ENCODE measurements at regions of chr21 and their contacts with region 1.

Region 1: GRCh38 chr21:45136927-45137611 is 62.7 kb downstream of the ADARB1 start:
- DNase-seq: no peak
- H3K4me3 ChIP-seq: no peak overlapping the region
- H3K27ac ChIP-seq: no peak overlapping the region
- H3K4me1 ChIP-seq: peaks cover 17% of the 10 kb centered on the region
- H3K27me3 ChIP-seq: no peaks in the 10 kb centered on the region
- CTCF ChIP-seq: peak; percentile 53 to 84 (median 77)
- POLR2A ChIP-seq: no peak

Region 2: GRCh38 chr21:44911389-44912157 is 225.5 kb before region 1 on chr21:
- intact Hi-C with region 1: no loop called
- DNase-seq: no peak
- H3K4me3 ChIP-seq: peak overlapping the region in 1 of 2 donors; percentile 1
- H3K27ac ChIP-seq: no peak overlapping the region
- H3K4me1 ChIP-seq: peaks cover 23% of the 10 kb centered on the region
- H3K27me3 ChIP-seq: no peaks in the 10 kb centered on the region
- CTCF ChIP-seq: peak in 2 of 3 experiments; percentile 3 to 43
- POLR2A ChIP-seq: no peak

Region 3: DNA sequence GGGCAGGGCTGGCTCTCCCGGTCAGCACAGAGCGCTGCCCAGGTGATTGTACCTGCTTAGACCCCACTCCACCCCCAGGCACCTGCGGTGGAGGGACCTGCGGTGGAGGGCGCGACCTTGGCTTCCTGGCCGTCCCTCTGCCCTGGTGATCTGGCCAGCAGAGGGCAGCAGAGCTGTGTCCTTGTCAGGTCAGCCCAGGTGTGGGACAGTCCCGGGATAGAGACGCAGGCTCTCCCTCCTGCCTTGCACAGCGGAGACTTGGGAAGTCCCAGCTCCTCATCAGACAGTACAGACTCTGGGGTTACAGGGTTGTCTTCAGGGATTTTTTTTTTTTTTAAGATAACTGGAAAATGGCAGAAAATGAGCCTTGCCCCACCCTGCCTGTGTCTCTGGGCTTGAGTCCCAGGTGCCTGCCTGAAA is 187.3 kb before region 1 on chr21:
- intact Hi-C with region 1: loop called (anchors 2 kb)
- DNase-seq: no peak
- H3K4me3 ChIP-seq: no peak overlapping the region
- H3K27ac ChIP-seq: no peak overlapping the region
- H3K4me1 ChIP-seq: peaks cover 17% of the 10 kb centered on the region
- H3K27me3 ChIP-seq: no peaks in the 10 kb centered on the region
- CTCF ChIP-seq: peak; percentile 89 to 95 (median 95)
- POLR2A ChIP-seq: no peak

Region 4: GRCh38 chr21:45074048-45074817 is 62.8 kb before region 1 on chr21 and contains the start of gene ADARB1:
- intact Hi-C with region 1: loop called (anchors 5 kb)
- DNase-seq: no peak
- H3K4me3 ChIP-seq: peak within 1 kb of the TSS; percentile 89 to 97
- H3K27ac ChIP-seq: peak within 1 kb of the TSS; percentile 94
- H3K4me1 ChIP-seq: peaks cover 29% of the 10 kb centered on the region
- H3K27me3 ChIP-seq: no peaks in the 10 kb centered on the region
- CTCF ChIP-seq: no peak
- POLR2A ChIP-seq: peak in 1 of 2 donors; percentile 79
- total RNA-seq, gene ADARB1: 19.6 TPM

Region 5: DNA sequence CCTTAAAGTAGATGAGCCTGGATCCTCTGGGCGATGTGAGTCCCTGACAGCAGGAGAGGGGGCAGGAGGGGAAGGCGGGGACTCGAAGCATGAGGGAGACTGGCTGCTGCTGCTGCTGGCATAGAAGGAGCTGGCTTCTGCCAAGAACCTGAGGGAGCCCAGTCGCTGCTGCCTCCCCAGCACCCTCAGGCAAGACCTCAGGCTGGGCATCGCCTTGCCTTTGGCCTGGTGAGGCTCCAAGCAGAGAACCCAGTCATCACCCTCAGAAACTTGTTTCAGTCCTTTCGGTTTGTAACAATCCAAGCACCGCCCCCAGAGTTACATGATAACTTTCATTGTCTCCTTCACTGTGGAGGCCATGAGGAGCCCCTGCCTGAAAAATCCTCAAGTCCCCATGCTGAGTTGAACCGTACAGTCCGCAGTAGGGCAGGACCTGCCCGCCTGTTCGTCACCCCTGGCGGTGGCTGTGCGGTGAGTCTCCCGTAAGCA is 111.9 kb after region 1 on chr21:
- intact Hi-C with region 1: no loop called
- DNase-seq: peak in 1 of 2 donors; percentile 74
- H3K4me3 ChIP-seq: peak overlapping the region; percentile 22 to 37
- H3K27ac ChIP-seq: no peak overlapping the region
- H3K4me1 ChIP-seq: no peaks in the 10 kb centered on the region
- H3K27me3 ChIP-seq: no peaks in the 10 kb centered on the region
- CTCF ChIP-seq: no peak
- POLR2A ChIP-seq: no peak